G401 (cell line): ENCODE measurements at regions of chr7 and their contacts with region 1.

Region 1: GRCh38 chr7:99267481-99267840 is 5.2 kb upstream of the MYH16 start:
- DNase-seq: no peak

Region 2: DNA sequence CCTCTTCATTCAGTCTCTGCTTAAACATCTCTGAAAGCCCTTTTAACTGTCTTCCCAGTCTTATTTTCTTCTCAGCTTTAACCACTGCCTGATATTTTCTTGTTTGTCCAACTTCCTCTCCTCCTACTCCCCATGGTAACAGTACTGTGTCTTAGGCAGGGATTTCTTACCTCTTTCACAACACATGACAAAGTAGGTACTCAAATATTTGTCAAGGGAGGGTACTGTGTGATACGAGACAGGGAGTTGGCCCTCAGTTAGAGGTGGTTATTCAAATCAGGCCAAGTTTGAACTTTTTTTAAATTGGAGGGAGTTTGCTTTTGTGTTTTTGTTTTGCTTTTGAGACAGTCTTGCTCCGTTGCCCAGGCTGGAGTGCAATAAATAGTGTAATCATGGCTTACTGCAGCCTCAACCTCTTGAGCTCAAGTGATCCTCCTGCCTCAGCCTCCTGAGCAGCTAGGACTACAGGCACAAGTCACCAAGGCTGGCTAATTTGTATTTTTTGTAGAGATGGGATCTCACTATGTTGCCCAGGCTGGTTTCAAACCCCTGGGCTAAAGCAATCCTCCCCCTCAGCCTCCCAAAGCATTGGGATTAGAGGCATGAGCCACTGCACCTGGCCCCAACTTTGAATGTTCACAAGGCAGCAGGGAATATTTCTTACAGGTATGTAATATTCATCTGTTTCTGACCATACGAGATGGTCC is 57.0 kb before region 1 on chr7:
- in situ Hi-C with region 1: loop called (anchors 10 kb)
- DNase-seq: no peak

Region 3: GRCh38 chr7:99314504-99314903 is 47.0 kb after region 1 on chr7:
- in situ Hi-C with region 1: no loop called
- DNase-seq: no peak

Region 4: DNA sequence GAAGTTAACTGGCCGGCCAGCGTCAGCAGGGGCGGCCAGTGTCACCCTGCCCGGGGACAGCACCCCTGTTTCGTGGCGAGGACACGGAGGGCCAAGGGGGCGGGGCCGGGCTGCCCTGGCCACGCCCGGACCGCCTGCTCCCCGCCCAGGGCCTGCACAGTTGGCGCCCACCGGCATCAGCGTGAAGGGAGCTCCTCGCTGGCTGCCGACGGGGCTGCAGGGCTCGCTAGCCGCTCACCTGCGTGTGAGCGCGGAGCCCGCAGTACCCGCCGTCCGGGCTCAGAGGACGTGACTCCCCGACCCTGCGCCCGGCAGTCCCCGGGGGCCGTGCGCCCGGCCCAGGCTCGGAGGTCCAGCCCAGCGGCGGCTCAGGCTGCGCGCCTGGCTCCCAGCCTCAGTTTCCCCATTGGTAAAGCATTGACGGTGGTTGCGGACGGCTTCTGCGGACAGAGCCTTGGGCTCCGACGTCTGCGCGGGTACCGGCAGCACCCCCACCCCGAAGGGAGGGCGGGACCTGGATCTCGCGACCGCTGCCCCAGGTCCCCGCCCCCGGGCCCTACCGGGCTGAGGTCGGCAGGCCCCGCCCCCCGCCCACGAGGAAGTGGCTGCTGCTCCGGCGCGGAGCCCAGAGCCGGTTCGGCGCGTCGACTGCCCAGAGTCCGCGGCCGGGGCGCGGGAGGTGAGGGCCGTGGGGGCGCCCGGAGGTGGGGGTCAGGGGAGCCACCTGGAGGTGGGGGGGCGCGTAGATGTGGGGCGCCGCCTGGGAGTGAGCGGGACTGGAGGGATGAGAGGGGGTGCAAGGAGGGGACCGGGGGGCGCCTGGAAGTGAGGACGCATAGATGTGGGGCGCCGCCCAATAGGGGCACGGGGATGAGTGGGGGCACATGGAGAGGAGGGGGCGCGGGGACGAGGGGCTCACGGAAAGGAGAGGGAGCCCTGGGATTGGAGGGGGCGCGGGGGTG is 106.9 kb after region 1 on chr7 and contains the start of gene ARPC1B:
- in situ Hi-C with region 1: no loop called
- DNase-seq: no peak
- total RNA-seq, gene ARPC1B: 281 and 284 TPM in 2 replicates

Region 5: DNA sequence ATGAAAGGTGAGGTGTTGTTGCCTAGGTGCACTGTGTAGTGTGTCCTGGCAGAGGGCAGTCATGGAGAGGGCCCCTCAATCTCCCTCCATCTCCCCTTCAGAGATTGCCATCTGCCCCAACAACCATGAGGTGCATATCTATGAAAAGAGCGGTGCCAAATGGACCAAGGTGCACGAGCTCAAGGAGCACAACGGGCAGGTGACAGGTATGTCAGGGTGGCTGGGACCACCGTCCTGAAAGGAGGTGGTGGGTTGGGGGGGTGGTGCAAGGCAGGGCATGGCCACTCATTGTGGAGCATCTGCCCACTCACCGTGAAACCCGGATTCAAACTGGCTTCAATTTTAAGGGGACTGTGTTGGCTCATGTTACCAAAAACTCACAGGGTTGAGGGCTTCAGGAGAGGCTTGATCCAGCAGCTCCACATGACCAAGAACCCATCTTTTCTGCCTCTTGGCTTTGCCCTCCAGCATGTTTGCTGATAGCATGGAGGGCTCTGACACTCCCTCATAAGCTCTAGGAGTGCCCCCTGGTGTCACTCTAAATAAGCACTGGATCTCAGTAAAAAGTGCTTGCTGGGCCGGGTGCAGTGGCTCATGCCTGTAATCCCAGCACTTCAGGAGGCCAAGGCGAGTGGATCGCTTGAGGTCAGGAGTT is 119.2 kb after region 1 on chr7:
- in situ Hi-C with region 1: no loop called
- DNase-seq: no peak